MCF 10A (cell line): ENCODE measurements at regions of chr11 and their contacts with region 1.

Region 1: GRCh38 chr11:43944761-43945311 is 2.4 kb downstream of the C11orf96 start:
- DNase-seq: peak; percentile 59
- H3K4me3 Mint-ChIP-seq: peak overlapping the region; percentile 80
- H3K27ac Mint-ChIP-seq: no peak overlapping the region
- H3K4me1 Mint-ChIP-seq: peaks cover 12% of the 10 kb centered on the region
- H3K27me3 Mint-ChIP-seq: peaks cover 58% of the 10 kb centered on the region
- CTCF ChIP-seq: peak; percentile 92

Region 2: DNA sequence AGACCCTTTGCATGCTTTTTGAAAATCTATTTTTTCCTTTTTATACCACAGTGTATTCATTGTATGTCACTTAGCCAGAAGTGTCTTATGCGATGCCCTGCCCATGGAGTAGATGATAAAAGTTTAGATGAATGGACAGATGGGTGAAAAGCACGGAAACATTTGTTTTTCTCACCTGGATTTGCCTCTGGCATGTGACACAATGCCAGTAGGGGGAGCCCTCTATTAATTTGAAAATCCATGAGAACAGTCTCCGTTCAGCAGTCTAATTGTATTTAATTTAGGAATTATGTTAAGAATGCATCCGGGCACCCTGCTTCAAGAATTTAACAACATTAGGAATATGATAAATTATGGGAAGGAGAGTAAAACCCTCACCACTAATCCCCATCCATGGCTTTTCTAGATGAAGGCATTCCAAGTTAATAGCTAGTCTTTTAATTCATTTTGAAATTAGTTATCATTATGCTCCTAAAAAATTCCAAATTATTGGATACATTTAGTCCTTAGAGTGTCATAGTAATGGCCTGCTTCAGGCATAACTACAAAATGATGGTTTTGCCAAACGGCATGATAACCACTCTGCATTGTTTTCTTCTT is 119.5 kb before region 1 on chr11:
- CTCF ChIA-PET with region 1: no interaction called
- POLR2A ChIA-PET with region 1: no interaction called
- intact Hi-C with region 1: loop called (anchors 5 kb)
- DNase-seq: peak; percentile 66
- H3K4me3 Mint-ChIP-seq: no peak overlapping the region
- H3K27ac Mint-ChIP-seq: no peak overlapping the region
- H3K4me1 Mint-ChIP-seq: no peaks in the 10 kb centered on the region
- H3K27me3 Mint-ChIP-seq: no peaks in the 10 kb centered on the region
- CTCF ChIP-seq: peak; percentile 69

Region 3: DNA sequence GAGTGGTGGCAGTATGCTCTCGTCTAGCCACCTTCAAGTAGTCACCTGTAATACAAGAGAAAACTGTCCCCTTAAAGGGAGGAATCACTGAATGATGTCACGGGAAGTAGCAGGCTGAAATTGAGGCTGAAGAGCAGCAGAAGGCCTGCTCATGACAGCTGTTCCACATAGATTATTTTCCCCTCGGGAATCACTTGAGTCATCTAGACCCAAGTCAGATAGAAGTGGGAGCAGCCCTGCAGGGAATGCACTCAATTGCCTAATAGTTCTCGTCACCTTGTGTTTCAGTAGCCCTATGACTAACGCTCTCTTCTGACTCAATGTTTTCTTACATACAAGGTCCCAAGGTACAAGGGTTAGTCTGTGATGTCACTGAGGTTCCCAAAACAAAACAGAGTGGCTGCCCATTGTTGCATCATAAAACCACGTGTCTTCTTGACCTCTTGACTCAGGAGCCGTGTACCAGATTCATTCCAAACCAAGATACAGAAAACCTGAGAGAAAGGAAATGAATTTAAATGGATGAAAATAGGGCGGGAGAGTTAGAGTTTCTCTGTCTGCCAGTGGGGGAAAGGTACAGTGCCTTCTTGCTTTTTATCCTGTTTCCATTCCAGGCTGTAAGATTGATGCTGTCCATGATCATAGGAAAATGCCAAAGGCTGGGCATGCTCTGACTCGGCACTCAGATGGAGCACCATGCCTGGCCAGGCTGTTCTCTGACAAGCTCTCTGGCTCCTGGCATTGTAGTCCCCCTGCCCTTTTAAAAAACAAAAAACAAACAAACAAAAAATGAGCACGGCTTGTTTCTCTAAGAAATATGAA is 24.0 kb before region 1 on chr11:
- CTCF ChIA-PET with region 1: interaction called, 8 read pairs
- POLR2A ChIA-PET with region 1: interaction called, 6 read pairs
- intact Hi-C with region 1: loop called (anchors 1 kb)
- DNase-seq: peak; percentile 100
- H3K4me3 Mint-ChIP-seq: peak overlapping the region; percentile 29
- H3K27ac Mint-ChIP-seq: peak overlapping the region; percentile 95
- H3K4me1 Mint-ChIP-seq: peaks cover 23% of the 10 kb centered on the region
- H3K27me3 Mint-ChIP-seq: no peaks in the 10 kb centered on the region
- CTCF ChIP-seq: no peak

Region 4: DNA sequence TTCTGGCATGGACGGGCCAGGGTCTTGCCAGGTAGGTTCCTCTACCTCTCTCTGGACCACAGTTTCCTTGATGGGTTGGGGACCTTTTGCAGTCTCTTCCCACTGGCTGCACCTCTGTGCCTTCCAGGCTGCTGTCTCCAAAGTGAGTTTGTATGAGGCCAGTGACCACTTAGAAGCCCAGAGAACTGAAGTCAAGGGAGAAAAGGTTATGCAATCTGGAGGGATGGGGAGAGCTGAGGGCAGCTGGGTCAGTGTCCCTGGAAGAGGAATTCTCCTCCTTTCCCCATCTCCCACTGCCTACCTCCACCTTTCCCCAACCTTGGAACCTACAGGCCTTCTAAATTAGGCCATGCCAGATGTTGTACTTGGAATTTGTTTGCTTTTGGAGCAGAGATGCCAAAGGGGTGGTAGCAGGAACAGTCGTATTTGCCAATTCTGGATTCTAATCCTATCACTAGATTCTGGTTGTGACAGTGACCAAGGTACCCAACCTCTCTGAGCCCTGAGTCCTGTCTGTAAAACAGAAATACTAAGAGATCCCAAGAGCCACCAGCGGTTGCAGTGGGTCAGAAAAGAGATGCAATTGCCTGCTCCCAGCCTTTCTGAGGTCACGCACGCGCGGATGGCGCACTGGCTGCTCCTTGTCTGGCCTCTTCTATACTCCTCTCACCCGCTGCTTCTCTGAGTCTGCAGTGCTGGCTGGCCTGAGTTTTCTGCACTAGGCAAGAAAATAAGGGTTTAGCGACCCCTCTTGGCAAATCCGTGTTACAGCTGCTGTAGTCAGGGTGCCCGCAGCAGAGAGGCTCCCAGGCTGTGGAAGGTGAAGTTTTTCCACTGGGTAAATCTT is 92.2 kb after region 1 on chr11:
- CTCF ChIA-PET with region 1: interaction called, 4 read pairs
- POLR2A ChIA-PET with region 1: no interaction called
- intact Hi-C with region 1: loop called (anchors 10 kb)
- DNase-seq: peak; percentile 67
- H3K4me3 Mint-ChIP-seq: no peak overlapping the region
- H3K27ac Mint-ChIP-seq: no peak overlapping the region
- H3K4me1 Mint-ChIP-seq: no peaks in the 10 kb centered on the region
- H3K27me3 Mint-ChIP-seq: peaks cover 14% of the 10 kb centered on the region
- CTCF ChIP-seq: peak; percentile 64